ENCODE measurements at regions of chr2 and their contacts with region 1.

Region 1: GRCh38 chr2:62456721-62457539 is 49.1 kb downstream of the TMEM17 start:
- DNase-seq: peak; percentile 82
- ATAC-seq: peak; percentile 90
- H3K4me3 Mint-ChIP-seq: no peak overlapping the region
- H3K27ac Mint-ChIP-seq: no peak overlapping the region
- H3K4me1 Mint-ChIP-seq: peaks cover 2% of the 10 kb centered on the region
- H3K27me3 Mint-ChIP-seq: peaks cover 4% of the 10 kb centered on the region

Region 2: DNA sequence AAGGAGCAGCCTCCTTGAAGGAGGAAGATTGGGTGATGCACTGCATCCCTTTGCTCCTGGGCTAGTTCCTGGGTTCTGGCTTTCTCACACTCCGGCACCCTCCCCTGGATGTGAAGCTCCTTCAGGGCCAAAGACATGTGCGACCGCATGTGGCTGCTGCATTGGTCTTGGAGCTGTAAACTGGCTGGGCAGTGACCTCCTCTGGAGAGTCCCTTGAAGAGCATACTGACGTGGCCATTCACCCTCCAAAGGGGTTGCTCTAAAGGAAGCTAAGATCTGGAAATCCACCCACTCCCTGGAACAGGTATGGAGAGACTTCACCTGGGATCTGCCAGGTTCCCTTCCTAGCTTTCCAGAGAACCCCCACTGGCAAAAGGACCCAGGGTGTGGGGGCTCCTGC is 13.0 kb before region 1 on chr2:
- CTCF ChIA-PET with region 1: interaction called, 14 read pairs
- POLR2A ChIA-PET with region 1: no interaction called
- intact Hi-C with region 1: no loop called
- DNase-seq: no peak
- ATAC-seq: no peak
- H3K4me3 Mint-ChIP-seq: no peak overlapping the region
- H3K27ac Mint-ChIP-seq: no peak overlapping the region
- H3K4me1 Mint-ChIP-seq: no peaks in the 10 kb centered on the region
- H3K27me3 Mint-ChIP-seq: no peaks in the 10 kb centered on the region

Region 3: GRCh38 chr2:62624855-62625254 is 167.9 kb after region 1 on chr2:
- CTCF ChIA-PET with region 1: no interaction called
- POLR2A ChIA-PET with region 1: no interaction called
- intact Hi-C with region 1: no loop called
- DNase-seq: no peak
- ATAC-seq: no peak
- H3K4me3 Mint-ChIP-seq: no peak overlapping the region
- H3K27ac Mint-ChIP-seq: no peak overlapping the region
- H3K4me1 Mint-ChIP-seq: no peaks in the 10 kb centered on the region
- H3K27me3 Mint-ChIP-seq: peaks cover 10% of the 10 kb centered on the region

Region 4: DNA sequence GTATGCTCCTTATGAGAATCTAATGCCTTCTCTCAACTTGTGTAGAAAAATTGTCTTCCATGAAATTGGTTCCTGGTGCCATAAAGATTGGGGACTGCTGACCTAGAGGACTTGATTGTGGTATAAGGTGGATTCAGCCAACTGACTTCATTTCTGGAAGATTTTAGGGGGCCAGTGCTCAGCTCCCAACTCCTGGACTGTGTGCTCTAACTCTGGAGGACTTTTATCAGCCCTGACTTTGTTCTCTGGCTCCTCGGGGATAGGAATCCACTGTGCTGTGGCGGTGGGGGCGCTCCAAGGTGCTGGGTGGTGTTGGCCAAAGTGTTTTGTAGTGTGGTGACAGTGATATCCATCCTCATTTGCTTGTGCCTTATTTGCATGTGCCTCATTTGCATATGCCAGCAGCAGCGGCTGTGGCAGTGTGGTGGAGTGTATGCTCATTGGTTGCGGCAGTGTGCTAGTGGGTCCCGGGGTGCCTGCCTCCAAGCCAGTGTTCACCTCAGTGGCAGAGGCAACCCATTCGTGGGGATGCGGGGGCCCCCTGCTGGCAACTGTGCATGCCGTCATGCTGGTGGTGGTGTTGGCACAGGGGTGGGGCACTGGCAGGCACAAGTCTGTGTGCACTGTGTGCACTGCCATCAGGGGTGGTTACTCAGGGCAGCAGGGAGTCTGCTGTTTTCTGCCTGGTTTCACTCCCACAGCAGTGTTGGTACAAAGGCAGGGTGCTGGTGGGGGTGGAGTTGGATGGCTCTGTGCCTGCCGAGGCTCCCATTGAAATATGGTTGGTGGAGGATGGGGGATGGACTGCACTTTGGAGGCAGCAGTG is 268.2 kb after region 1 on chr2:
- CTCF ChIA-PET with region 1: interaction called, 3 read pairs
- POLR2A ChIA-PET with region 1: no interaction called
- intact Hi-C with region 1: loop called in 1 of 2 experiments (anchors 1 kb)
- DNase-seq: peak; percentile 48
- ATAC-seq: peak; percentile 60
- H3K4me3 Mint-ChIP-seq: no peak overlapping the region
- H3K27ac Mint-ChIP-seq: no peak overlapping the region
- H3K4me1 Mint-ChIP-seq: peaks cover 15% of the 10 kb centered on the region
- H3K27me3 Mint-ChIP-seq: no peaks in the 10 kb centered on the region

Region 5: DNA sequence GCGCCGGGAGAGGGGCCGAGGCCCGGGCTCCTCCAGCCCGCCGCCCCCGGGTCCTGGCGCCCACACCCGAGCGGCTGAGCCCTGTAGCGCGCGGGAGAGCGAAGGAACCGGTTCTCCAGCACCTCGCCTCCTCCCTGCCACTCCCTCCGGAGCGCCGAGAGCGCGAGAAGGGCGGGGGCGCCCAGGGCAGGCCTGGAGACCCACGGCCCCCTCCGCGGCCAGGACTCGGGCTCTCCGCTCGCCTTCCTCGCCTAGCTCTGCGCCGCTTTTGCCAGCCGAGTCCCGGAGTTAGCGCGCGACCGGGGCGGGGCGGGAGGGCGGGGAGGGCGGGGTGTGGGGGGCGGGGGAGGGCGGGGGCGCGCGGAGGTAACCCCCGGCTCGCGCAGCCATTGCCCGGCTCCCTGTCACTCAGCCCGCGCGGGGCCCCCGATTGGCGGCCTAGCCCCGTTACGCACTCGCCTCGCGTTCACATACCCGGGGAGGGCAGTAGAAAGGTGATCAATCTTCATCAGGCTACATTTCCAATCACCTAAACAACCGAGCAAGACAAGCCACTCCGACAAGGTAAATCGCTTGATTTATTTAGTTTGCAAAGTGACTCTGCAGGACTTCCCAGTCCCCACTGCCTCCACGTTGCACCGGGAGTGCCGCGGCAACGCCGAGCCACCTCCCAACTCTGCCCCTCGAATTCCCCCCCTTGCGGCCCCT is 593.6 kb after region 1 on chr2 and contains the start of gene OTX1:
- CTCF ChIA-PET with region 1: no interaction called
- POLR2A ChIA-PET with region 1: no interaction called
- intact Hi-C with region 1: loop called in 1 of 2 experiments (anchors 2 kb)
- DNase-seq: peak; percentile 80
- ATAC-seq: peak; percentile 80
- H3K4me3 Mint-ChIP-seq: peak within 1 kb of the TSS; percentile 75
- H3K27ac Mint-ChIP-seq: peak within 1 kb of the TSS; percentile 47
- H3K4me1 Mint-ChIP-seq: peaks cover 60% of the 10 kb centered on the region
- H3K27me3 Mint-ChIP-seq: peaks cover 78% of the 10 kb centered on the region
- total RNA-seq, gene OTX1: not detected

Region 6: DNA sequence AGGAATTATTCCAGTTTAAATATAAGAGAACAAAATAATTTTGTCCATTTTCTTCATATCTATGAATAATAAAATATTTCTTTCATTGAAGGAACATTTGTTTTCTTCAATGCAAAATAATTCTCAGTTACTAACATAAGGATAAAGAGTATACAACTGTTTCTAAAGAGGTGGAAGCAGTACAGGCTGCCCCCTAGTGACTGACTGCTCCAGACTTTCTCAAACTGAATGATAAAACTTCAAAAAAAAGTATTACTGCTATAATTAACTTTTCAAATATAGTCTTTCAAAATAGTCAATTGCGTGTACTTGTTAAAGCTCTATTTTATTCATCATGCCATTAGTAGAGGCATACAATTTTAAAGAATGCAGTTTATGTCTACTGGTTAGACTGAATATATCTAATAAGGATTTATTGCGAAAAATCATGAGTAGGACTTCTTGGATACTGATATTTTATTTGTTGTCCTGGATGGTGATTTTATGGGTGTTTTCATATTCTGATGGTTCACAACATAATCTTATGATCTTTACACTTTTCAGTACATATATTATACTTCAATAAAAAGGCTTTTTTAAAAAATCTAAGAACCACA is 1031.3 kb after region 1 on chr2:
- CTCF ChIA-PET with region 1: no interaction called
- POLR2A ChIA-PET with region 1: no interaction called
- intact Hi-C with region 1: loop called in 1 of 2 experiments (anchors 1 kb)
- DNase-seq: peak; percentile 39
- ATAC-seq: no peak
- H3K4me3 Mint-ChIP-seq: no peak overlapping the region
- H3K27ac Mint-ChIP-seq: no peak overlapping the region
- H3K4me1 Mint-ChIP-seq: no peaks in the 10 kb centered on the region
- H3K27me3 Mint-ChIP-seq: no peaks in the 10 kb centered on the region

Measured in activated CD4-positive, alpha-beta T cell treated with anti-CD3 and anti-CD28 coated beads for 36 hours (primary cell).